Activated B cell treated with CpG ODN at 0.5 μM for 24 hours (primary cell): ENCODE measurements at regions of chr5 and their contacts with region 1.

Region 1: GRCh38 chr5:62489471-62489870 is 76.9 kb downstream of the IPO11 start:
- DNase-seq: no peak
- ATAC-seq: no peak
- H3K4me3 Mint-ChIP-seq: no peak overlapping the region
- H3K27ac Mint-ChIP-seq: no peak overlapping the region
- H3K4me1 Mint-ChIP-seq: peaks cover under 1% of the 10 kb centered on the region
- H3K27me3 Mint-ChIP-seq: no peaks in the 10 kb centered on the region
- CTCF ChIP-seq: no peak

Region 2: GRCh38 chr5:61256474-61256873 is 1233.0 kb before region 1 on chr5:
- CTCF ChIA-PET with region 1: no interaction called
- POLR2A ChIA-PET with region 1: no interaction called
- intact Hi-C with region 1: no loop called
- DNase-seq: no peak
- ATAC-seq: no peak
- H3K4me3 Mint-ChIP-seq: no peak overlapping the region
- H3K27ac Mint-ChIP-seq: no peak overlapping the region
- H3K4me1 Mint-ChIP-seq: no peaks in the 10 kb centered on the region
- H3K27me3 Mint-ChIP-seq: peaks cover 9% of the 10 kb centered on the region
- CTCF ChIP-seq: no peak

Region 3: DNA sequence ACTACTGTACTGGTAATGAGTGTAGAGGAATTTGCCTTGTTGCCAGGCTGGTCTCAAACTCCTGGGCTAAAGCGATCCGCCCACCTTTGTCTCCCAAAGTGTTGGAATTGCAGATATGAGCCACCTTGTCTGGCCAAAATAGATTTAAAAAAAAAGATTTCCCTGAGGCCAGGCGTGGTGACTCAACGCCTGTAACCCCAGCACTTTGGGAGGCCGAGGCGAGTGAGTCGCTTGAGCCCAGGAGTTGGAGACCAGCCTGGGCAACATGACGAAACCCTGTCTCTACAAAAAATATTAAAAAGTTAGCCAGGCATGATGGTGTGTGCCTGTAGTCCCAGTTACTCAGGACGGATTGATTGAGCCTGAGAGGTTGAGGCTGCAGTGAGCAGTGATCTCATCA is 14.4 kb before region 1 on chr5:
- CTCF ChIA-PET with region 1: no interaction called
- POLR2A ChIA-PET with region 1: no interaction called
- intact Hi-C with region 1: no loop called
- DNase-seq: no peak
- ATAC-seq: no peak
- H3K4me3 Mint-ChIP-seq: no peak overlapping the region
- H3K27ac Mint-ChIP-seq: no peak overlapping the region
- H3K4me1 Mint-ChIP-seq: no peaks in the 10 kb centered on the region
- H3K27me3 Mint-ChIP-seq: no peaks in the 10 kb centered on the region
- CTCF ChIP-seq: no peak

Region 4: DNA sequence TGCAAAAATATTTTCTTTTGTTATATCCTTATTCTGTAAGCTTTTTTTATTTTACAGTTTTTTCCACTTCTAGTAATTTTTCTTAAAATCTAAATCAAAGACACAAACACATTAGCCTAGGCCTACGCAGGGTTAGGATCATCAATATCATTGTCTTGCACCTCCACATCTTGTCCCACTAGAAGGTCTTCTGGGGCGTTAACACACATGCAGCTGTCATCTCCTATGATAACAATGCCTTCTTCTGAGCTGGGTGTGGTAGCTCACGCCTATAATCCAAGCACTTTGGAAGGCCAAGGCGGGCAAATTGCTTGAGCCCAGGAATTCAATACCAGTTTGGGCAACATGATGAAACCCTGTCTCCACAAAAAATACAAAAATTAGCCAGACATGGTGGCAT is 10.3 kb after region 1 on chr5:
- CTCF ChIA-PET with region 1: no interaction called
- POLR2A ChIA-PET with region 1: no interaction called
- intact Hi-C with region 1: loop called (anchors 2 kb)
- DNase-seq: no peak
- ATAC-seq: no peak
- H3K4me3 Mint-ChIP-seq: no peak overlapping the region
- H3K27ac Mint-ChIP-seq: no peak overlapping the region
- H3K4me1 Mint-ChIP-seq: peaks cover 3% of the 10 kb centered on the region
- H3K27me3 Mint-ChIP-seq: no peaks in the 10 kb centered on the region
- CTCF ChIP-seq: no peak

Region 5: GRCh38 chr5:62593331-62593730 is 103.9 kb after region 1 on chr5:
- CTCF ChIA-PET with region 1: no interaction called
- POLR2A ChIA-PET with region 1: no interaction called
- intact Hi-C with region 1: no loop called
- DNase-seq: no peak
- ATAC-seq: no peak
- H3K4me3 Mint-ChIP-seq: no peak overlapping the region
- H3K27ac Mint-ChIP-seq: no peak overlapping the region
- H3K4me1 Mint-ChIP-seq: peaks cover 12% of the 10 kb centered on the region
- H3K27me3 Mint-ChIP-seq: no peaks in the 10 kb centered on the region
- CTCF ChIP-seq: no peak

Region 6: GRCh38 chr5:63981864-63982263 is 1492.4 kb after region 1 on chr5:
- CTCF ChIA-PET with region 1: no interaction called
- POLR2A ChIA-PET with region 1: no interaction called
- intact Hi-C with region 1: no loop called
- DNase-seq: no peak
- ATAC-seq: no peak
- H3K4me3 Mint-ChIP-seq: no peak overlapping the region
- H3K27ac Mint-ChIP-seq: no peak overlapping the region
- H3K4me1 Mint-ChIP-seq: no peaks in the 10 kb centered on the region
- H3K27me3 Mint-ChIP-seq: no peaks in the 10 kb centered on the region
- CTCF ChIP-seq: no peak